ENCODE measurements at regions of chr13 and their contacts with region 1.

Region 1: GRCh38 chr13:29081036-29081435 is 260.9 kb downstream of the MTUS2 start:
- DNase-seq: peak in 21 of 35 experiments; percentile 0 to 57 (median 6)
- ATAC-seq: peak; percentile 62 to 93 (median 90)
- H3K4me3 ChIP-seq: no peak overlapping the region
- H3K4me3 Mint-ChIP-seq: no peak overlapping the region
- H3K27ac ChIP-seq: no peak overlapping the region
- H3K27ac Mint-ChIP-seq: peak overlapping the region; percentile 52 to 91
- H3K4me1 ChIP-seq: peaks cover 15 to 23% of the 10 kb centered on the region in 2 experiments
- H3K4me1 Mint-ChIP-seq: peaks cover 0 to 42% (median 11%) of the 10 kb centered on the region in 3 donors
- H3K27me3 ChIP-seq: no peaks in the 10 kb centered on the region
- H3K27me3 Mint-ChIP-seq: no peaks in the 10 kb centered on the region

Region 2: DNA sequence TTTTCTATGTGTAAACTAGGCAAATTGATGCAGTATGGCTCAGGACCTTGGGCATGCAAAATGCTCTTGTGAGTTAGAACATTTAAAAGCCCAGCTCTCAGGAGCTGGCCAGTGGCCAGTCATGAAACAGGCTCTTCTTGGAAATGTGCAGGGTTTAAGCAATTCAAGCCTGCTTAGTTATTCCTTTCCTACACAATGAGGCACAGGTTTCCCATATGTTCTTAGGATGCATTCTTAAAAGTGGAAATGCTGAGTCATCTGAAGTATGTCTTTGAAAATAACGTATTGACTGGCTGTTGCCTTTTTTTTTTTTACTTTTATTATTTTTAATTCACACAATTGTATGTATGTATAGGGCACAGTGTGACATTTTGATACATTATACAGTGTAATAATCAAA is 213.8 kb after region 1 on chr13:
- CTCF ChIA-PET with region 1: no interaction called
- POLR2A ChIA-PET with region 1: interaction called in 1 of 2 experiments, 10 read pairs
- DNase-seq: no peak
- ATAC-seq: no peak
- H3K4me3 ChIP-seq: no peak overlapping the region
- H3K4me3 Mint-ChIP-seq: no peak overlapping the region
- H3K27ac ChIP-seq: no peak overlapping the region
- H3K27ac Mint-ChIP-seq: no peak overlapping the region
- H3K4me1 ChIP-seq: no peaks in the 10 kb centered on the region
- H3K4me1 Mint-ChIP-seq: no peaks in the 10 kb centered on the region
- H3K27me3 ChIP-seq: no peaks in the 10 kb centered on the region
- H3K27me3 Mint-ChIP-seq: peaks cover 9 to 13% of the 10 kb centered on the region in 2 donors